ENCODE measurements at regions of chr7 and their contacts with region 1.

Region 1: GRCh38 chr7:9252739-9253138 is 819.3 kb downstream of the NXPH1 start:
- DNase-seq: no peak
- H3K4me3 Mint-ChIP-seq: no peak overlapping the region
- H3K27ac Mint-ChIP-seq: no peak overlapping the region
- H3K4me1 Mint-ChIP-seq: no peaks in the 10 kb centered on the region
- H3K27me3 Mint-ChIP-seq: no peaks in the 10 kb centered on the region
- CTCF ChIP-seq: no peak

Region 2: GRCh38 chr7:9091282-9091681 is 161.5 kb before region 1 on chr7:
- CTCF ChIA-PET with region 1: no interaction called
- intact Hi-C with region 1: no loop called
- DNase-seq: no peak
- H3K4me3 Mint-ChIP-seq: no peak overlapping the region
- H3K27ac Mint-ChIP-seq: no peak overlapping the region
- H3K4me1 Mint-ChIP-seq: peaks cover 9% of the 10 kb centered on the region
- H3K27me3 Mint-ChIP-seq: no peaks in the 10 kb centered on the region
- CTCF ChIP-seq: no peak

Region 3: GRCh38 chr7:9146281-9146680 is 106.5 kb before region 1 on chr7:
- CTCF ChIA-PET with region 1: no interaction called
- intact Hi-C with region 1: no loop called
- DNase-seq: no peak
- H3K4me3 Mint-ChIP-seq: no peak overlapping the region
- H3K27ac Mint-ChIP-seq: no peak overlapping the region
- H3K4me1 Mint-ChIP-seq: no peaks in the 10 kb centered on the region
- H3K27me3 Mint-ChIP-seq: no peaks in the 10 kb centered on the region
- CTCF ChIP-seq: no peak

Region 4: GRCh38 chr7:9240041-9240440 is 12.7 kb before region 1 on chr7:
- CTCF ChIA-PET with region 1: interaction called, 10 read pairs
- intact Hi-C with region 1: no loop called
- DNase-seq: no peak
- H3K4me3 Mint-ChIP-seq: no peak overlapping the region
- H3K27ac Mint-ChIP-seq: no peak overlapping the region
- H3K4me1 Mint-ChIP-seq: peaks cover 13% of the 10 kb centered on the region
- H3K27me3 Mint-ChIP-seq: no peaks in the 10 kb centered on the region
- CTCF ChIP-seq: no peak

Region 5: GRCh38 chr7:9621927-9622326 is 369.2 kb after region 1 on chr7:
- CTCF ChIA-PET with region 1: no interaction called
- intact Hi-C with region 1: no loop called
- DNase-seq: no peak
- H3K4me3 Mint-ChIP-seq: no peak overlapping the region
- H3K27ac Mint-ChIP-seq: no peak overlapping the region
- H3K4me1 Mint-ChIP-seq: no peaks in the 10 kb centered on the region
- H3K27me3 Mint-ChIP-seq: no peaks in the 10 kb centered on the region
- CTCF ChIP-seq: no peak

Measured in Calu3 (cell line).